B cell (primary cell): ENCODE measurements at regions of chr21 and their contacts with region 1.

Region 1: GRCh38 chr21:34865928-34866284 is 183.2 kb downstream of the RUNX1 start:
- DNase-seq: peak; percentile 76
- ATAC-seq: peak; percentile 84
- H3K4me3 ChIP-seq: no peak overlapping the region
- H3K4me3 Mint-ChIP-seq: peak overlapping the region; percentile 69
- H3K27ac ChIP-seq: no peak overlapping the region
- H3K27ac Mint-ChIP-seq: peak overlapping the region; percentile 88
- H3K4me1 ChIP-seq: peaks cover 24 to 27% of the 10 kb centered on the region in 2 donors
- H3K4me1 Mint-ChIP-seq: peaks cover 31% of the 10 kb centered on the region
- H3K27me3 ChIP-seq: no peaks in the 10 kb centered on the region
- H3K27me3 Mint-ChIP-seq: no peaks in the 10 kb centered on the region
- CTCF ChIP-seq: no peak

Region 2: GRCh38 chr21:34881894-34882371 is 16.0 kb after region 1 on chr21:
- CTCF ChIA-PET with region 1: interaction called, 17 read pairs
- POLR2A ChIA-PET with region 1: interaction called, 15 read pairs
- intact Hi-C with region 1: loop called (anchors 1 kb)
- DNase-seq: no peak
- ATAC-seq: no peak
- H3K4me3 ChIP-seq: no peak overlapping the region
- H3K4me3 Mint-ChIP-seq: no peak overlapping the region
- H3K27ac ChIP-seq: peak overlapping the region in 1 of 2 donors; percentile 12
- H3K27ac Mint-ChIP-seq: no peak overlapping the region
- H3K4me1 ChIP-seq: peaks cover 35 to 46% of the 10 kb centered on the region in 2 donors
- H3K4me1 Mint-ChIP-seq: peaks cover 46% of the 10 kb centered on the region
- H3K27me3 ChIP-seq: no peaks in the 10 kb centered on the region
- H3K27me3 Mint-ChIP-seq: no peaks in the 10 kb centered on the region
- CTCF ChIP-seq: no peak

Region 3: GRCh38 chr21:35616090-35616489 is 750.2 kb after region 1 on chr21:
- CTCF ChIA-PET with region 1: no interaction called
- POLR2A ChIA-PET with region 1: no interaction called
- intact Hi-C with region 1: no loop called
- DNase-seq: peak; percentile 28
- ATAC-seq: no peak
- H3K4me3 ChIP-seq: no peak overlapping the region
- H3K4me3 Mint-ChIP-seq: no peak overlapping the region
- H3K27ac ChIP-seq: no peak overlapping the region
- H3K27ac Mint-ChIP-seq: no peak overlapping the region
- H3K4me1 ChIP-seq: no peaks in the 10 kb centered on the region
- H3K4me1 Mint-ChIP-seq: peaks cover 2% of the 10 kb centered on the region
- H3K27me3 ChIP-seq: peaks cover 0 to 4% (median 2%) of the 10 kb centered on the region in 4 experiments
- H3K27me3 Mint-ChIP-seq: peaks cover 15% of the 10 kb centered on the region
- CTCF ChIP-seq: peak; percentile 46